ENCODE measurements at regions of chr6 and their contacts with region 1.

Region 1: GRCh38 chr6:7107578-7108195 is at the start of gene RREB1:
- DNase-seq: peak; percentile 50 to 77
- ATAC-seq: peak; percentile 62 to 79 (median 76)
- H3K4me3 ChIP-seq: peak within 1 kb of the TSS; percentile 79
- H3K4me3 Mint-ChIP-seq: peak within 1 kb of the TSS; percentile 92
- H3K27ac ChIP-seq: peak within 1 kb of the TSS; percentile 76
- H3K27ac Mint-ChIP-seq: peak within 1 kb of the TSS; percentile 84 to 94
- H3K4me1 ChIP-seq: peaks cover 17% of the 10 kb centered on the region
- H3K4me1 Mint-ChIP-seq: peaks cover 32 to 36% of the 10 kb centered on the region in 2 donors
- H3K27me3 ChIP-seq: no peaks in the 10 kb centered on the region
- H3K27me3 Mint-ChIP-seq: no peaks in the 10 kb centered on the region
- CTCF ChIP-seq: no peak
- total RNA-seq, gene RREB1: 42.2 to 51.8 (median 44.0) TPM

Region 2: DNA sequence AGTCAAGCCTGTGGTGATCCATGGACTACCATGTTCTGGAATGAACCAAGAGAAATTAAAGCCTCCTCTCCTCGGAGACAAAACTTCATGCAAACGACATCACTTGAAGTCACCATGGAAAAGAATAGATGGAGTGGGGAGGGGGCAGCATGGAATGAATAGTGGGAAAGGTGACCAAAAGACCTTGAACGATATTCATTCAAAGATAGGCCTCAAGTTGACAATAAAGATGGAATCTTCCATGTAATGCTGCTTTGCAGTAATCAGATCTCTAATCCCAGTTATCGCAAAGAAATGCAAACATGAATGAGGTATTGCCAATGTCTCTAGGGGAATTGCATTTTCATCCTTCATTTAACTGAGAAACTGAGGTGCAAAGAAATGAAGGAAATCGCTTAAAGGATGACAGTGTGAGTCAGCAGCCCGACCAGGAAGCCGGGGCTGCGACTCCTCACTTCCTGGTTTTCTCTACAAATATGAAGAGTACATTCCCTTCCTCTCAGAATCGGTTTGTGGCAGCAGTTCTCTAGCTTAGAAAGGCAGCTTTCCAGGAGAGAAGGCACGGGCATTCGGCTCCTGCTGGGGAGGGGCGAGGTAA is 65.5 kb before region 1 on chr6:
- intact Hi-C with region 1: no loop called
- DNase-seq: peak in 1 of 2 donors; percentile 17
- ATAC-seq: no peak
- H3K4me3 ChIP-seq: no peak overlapping the region
- H3K4me3 Mint-ChIP-seq: no peak overlapping the region
- H3K27ac ChIP-seq: no peak overlapping the region
- H3K27ac Mint-ChIP-seq: peak overlapping the region in 1 of 2 donors; percentile 20
- H3K4me1 ChIP-seq: peaks cover 6% of the 10 kb centered on the region
- H3K4me1 Mint-ChIP-seq: peaks cover 9 to 16% of the 10 kb centered on the region in 2 donors
- H3K27me3 ChIP-seq: no peaks in the 10 kb centered on the region
- H3K27me3 Mint-ChIP-seq: no peaks in the 10 kb centered on the region
- CTCF ChIP-seq: no peak

Region 3: DNA sequence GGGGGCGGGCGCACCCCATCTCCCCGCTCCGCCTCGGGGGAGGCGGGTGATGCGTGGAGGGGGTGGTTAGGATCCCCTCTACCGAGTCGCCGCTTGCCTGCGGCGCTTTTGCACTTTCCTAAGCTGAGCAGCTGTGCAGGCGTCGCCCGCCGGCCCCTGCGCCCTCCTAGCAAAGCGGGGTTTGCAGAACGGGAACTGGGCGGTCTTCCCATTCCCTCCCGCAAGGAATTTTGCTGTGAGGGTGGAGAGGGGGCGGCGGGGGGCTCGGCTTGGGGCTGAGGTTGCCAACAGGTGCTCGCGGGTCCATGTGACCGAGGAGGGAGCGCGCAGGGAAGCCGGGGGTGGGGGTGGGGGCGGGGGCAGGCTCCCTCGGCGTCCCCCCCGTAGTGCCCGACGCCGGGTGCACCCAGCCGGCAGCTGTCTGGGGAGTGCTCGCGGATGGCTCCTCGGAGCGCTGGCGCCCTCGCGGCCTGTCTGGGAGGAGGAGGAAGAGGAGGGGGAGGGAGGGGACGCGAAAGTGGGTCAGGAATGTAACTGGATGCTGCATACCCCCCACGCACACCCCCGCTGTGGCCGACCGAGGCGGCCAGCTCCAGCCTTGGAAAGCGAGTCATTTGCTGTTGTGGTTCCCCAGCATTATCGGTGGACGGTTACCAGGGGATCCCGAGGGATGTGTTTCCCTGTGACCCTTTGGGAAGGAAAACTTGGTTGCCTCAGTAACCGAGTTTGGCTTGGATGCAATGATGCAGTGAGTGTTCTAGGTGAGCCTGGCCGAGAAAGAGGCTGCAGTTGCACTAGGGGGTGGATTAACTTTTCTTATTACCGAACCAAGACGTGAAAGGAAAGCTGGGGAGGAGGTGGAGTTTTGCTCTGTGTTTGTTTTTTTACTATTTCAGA is 55.3 kb before region 1 on chr6:
- intact Hi-C with region 1: no loop called
- DNase-seq: peak in 1 of 2 donors; percentile 46
- ATAC-seq: peak; percentile 18 to 60 (median 53)
- H3K4me3 ChIP-seq: peak overlapping the region; percentile 55
- H3K4me3 Mint-ChIP-seq: peak overlapping the region; percentile 73
- H3K27ac ChIP-seq: no peak overlapping the region
- H3K27ac Mint-ChIP-seq: no peak overlapping the region
- H3K4me1 ChIP-seq: peaks cover 15% of the 10 kb centered on the region
- H3K4me1 Mint-ChIP-seq: peaks cover 0 to 7% of the 10 kb centered on the region in 2 donors
- H3K27me3 ChIP-seq: no peaks in the 10 kb centered on the region
- H3K27me3 Mint-ChIP-seq: peaks cover 0 to 4% of the 10 kb centered on the region in 2 donors
- CTCF ChIP-seq: no peak

Region 4: GRCh38 chr6:7086488-7086887 is 21.2 kb before region 1 on chr6:
- intact Hi-C with region 1: loop called (anchors 2 kb)
- DNase-seq: peak in 1 of 2 donors; percentile 72
- ATAC-seq: peak; percentile 53 to 69 (median 55)
- H3K4me3 ChIP-seq: peak overlapping the region; percentile 38
- H3K4me3 Mint-ChIP-seq: peak overlapping the region; percentile 94
- H3K27ac ChIP-seq: peak overlapping the region; percentile 34
- H3K27ac Mint-ChIP-seq: peak overlapping the region; percentile 79 to 87
- H3K4me1 ChIP-seq: peaks cover 21% of the 10 kb centered on the region
- H3K4me1 Mint-ChIP-seq: peaks cover 23 to 26% of the 10 kb centered on the region in 2 donors
- H3K27me3 ChIP-seq: no peaks in the 10 kb centered on the region
- H3K27me3 Mint-ChIP-seq: no peaks in the 10 kb centered on the region
- CTCF ChIP-seq: no peak

Region 5: GRCh38 chr6:7145885-7146828 is 38.5 kb after region 1 on chr6:
- intact Hi-C with region 1: loop called (anchors 2 kb)
- DNase-seq: peak in 1 of 2 donors; percentile 40
- ATAC-seq: peak; percentile 67 to 74 (median 73)
- H3K4me3 ChIP-seq: no peak overlapping the region
- H3K4me3 Mint-ChIP-seq: peak overlapping the region; percentile 84
- H3K27ac ChIP-seq: peak overlapping the region; percentile 55
- H3K27ac Mint-ChIP-seq: peak overlapping the region; percentile 78 to 89
- H3K4me1 ChIP-seq: peaks cover 29% of the 10 kb centered on the region
- H3K4me1 Mint-ChIP-seq: peaks cover 59 to 61% of the 10 kb centered on the region in 2 donors
- H3K27me3 ChIP-seq: no peaks in the 10 kb centered on the region
- H3K27me3 Mint-ChIP-seq: no peaks in the 10 kb centered on the region
- CTCF ChIP-seq: no peak

Measured in natural killer cell (primary cell).